Ovary (tissue), 10 donors: ENCODE measurements at regions of chr6 and their contacts with region 1.

Region 1: GRCh38 chr6:143677891-143678791 is at the start of gene PHACTR2:
- DNase-seq: peak; percentile 75 to 82 (median 77)
- H3K4me3 ChIP-seq: peak within 1 kb of the TSS; percentile 63
- H3K27ac ChIP-seq: peak within 1 kb of the TSS; percentile 88 to 94
- H3K4me1 ChIP-seq: peaks cover 5% of the 10 kb centered on the region
- H3K27me3 ChIP-seq: no peaks in the 10 kb centered on the region
- CTCF ChIP-seq: no peak
- EP300 ChIP-seq: no peak
- POLR2A ChIP-seq: no peak
- total RNA-seq, gene PHACTR2: 29.0 to 76.2 (median 47.9) TPM

Region 2: GRCh38 chr6:143745166-143746133 is 67.3 kb after region 1 on chr6:
- intact Hi-C with region 1: loop called in 1 of 4 experiments (anchors 2 kb)
- DNase-seq: peak; percentile 33 to 57 (median 46)
- H3K4me3 ChIP-seq: peak overlapping the region; percentile 12
- H3K27ac ChIP-seq: peak overlapping the region; percentile 4 to 76
- H3K4me1 ChIP-seq: peaks cover 24% of the 10 kb centered on the region
- H3K27me3 ChIP-seq: no peaks in the 10 kb centered on the region
- CTCF ChIP-seq: no peak
- EP300 ChIP-seq: no peak
- POLR2A ChIP-seq: no peak

Region 3: DNA sequence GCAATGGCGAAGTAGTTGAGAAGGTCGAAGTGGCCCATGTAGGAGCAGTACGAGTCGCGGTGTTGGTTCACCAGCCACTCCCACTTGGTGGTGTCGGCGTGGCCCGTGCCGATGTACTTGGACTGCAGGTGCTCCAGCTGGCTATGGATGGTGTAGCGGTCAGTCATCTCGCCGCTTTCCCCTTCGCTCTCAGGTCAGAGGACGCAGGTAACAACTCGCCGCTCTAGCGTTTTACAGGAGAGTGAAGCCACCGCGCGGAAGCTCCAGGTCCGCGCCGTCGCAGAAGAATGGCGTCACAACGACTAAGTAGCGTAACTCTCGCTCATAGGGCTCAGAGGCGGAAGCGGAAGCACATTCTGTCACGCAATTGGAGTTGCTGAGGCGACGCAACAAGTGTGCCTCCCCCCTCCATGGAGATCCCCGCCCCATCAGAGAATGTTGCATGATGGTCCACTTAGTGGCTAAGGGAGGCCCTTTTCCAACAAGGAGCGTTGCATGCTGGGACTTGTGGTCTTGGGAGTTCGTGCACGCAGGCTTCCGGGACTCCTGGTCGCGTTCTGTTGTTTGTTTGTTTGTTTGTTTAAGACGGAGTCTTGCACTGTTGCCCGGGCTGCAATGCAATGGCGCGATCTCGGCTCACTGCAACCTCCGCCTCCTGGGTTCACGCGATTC is 417.3 kb after region 1 on chr6 and contains the start of gene SF3B5:
- intact Hi-C with region 1: no loop called
- DNase-seq: peak; percentile 97 to 98 (median 98)
- H3K4me3 ChIP-seq: peak within 1 kb of the TSS; percentile 90
- H3K27ac ChIP-seq: peak within 1 kb of the TSS in 1 of 2 donors; percentile 65
- H3K4me1 ChIP-seq: peaks cover 12% of the 10 kb centered on the region
- H3K27me3 ChIP-seq: no peaks in the 10 kb centered on the region
- CTCF ChIP-seq: peak in 1 of 3 donors; percentile 4
- EP300 ChIP-seq: no peak
- POLR2A ChIP-seq: peak; percentile 70
- total RNA-seq, gene SF3B5: 86.8 to 151 (median 117) TPM